Activated CD4-positive, alpha-beta T cell treated with anti-CD3 and anti-CD28 coated beads, Interleukin-2, amount 10 ng/mL, durations not matched to agents 24 days and 14 days (primary cell): ENCODE measurements at regions of chr1 and their contacts with region 1.

Region 1: DNA sequence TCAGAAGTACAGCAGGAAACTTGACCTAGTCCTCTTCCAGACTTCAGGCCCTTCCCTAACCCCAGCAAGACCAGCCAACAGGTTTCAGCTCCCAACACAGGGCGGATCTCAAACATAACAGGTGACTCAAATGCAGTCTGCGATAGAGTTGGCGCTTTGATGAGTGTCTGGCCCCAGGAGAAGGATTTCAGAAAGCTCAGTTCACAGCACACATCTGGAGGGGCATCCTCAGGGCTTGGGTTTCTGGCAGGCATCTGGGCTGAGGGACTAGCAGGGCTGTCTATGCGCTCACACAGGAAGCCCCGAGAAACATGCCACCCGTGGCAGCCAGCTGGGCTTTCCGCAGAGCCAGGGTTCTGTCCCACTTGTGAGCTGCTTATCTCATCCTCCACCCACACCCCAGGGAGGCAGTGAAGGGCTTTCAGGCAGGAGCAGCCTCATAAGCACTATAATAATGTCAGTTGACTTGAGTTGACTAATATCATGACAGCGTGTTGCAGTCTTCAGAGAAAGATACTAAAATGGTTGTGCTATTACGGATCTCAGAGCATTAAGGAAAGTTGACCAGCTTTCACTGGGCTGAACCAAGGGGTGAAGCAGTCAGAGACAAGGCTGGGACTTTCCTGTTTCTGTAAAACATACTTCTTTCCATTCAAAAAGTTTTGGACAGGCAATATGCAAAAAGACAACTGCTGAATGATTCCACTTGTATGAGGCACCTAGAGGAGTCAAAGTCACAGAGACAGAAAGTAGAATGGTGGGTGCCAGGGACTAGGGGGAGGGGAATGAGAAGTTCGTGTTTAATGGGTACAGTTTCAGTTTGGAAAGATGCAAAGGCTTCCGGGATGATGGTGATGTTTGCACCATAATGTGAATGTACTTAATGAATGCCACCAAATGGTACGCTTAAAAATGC is 233.0 kb upstream of the IRF2BP2 start:
- DNase-seq: peak; percentile 89
- H3K4me3 Mint-ChIP-seq: peak overlapping the region; percentile 74
- H3K27ac Mint-ChIP-seq: peak overlapping the region; percentile 94
- H3K4me1 Mint-ChIP-seq: peaks cover 84% of the 10 kb centered on the region
- H3K27me3 Mint-ChIP-seq: no peaks in the 10 kb centered on the region

Region 2: GRCh38 chr1:234730770-234731568 is 112.0 kb before region 1 on chr1:
- intact Hi-C with region 1: loop called (anchors 1 kb)
- DNase-seq: peak; percentile 86
- H3K4me3 Mint-ChIP-seq: peak overlapping the region; percentile 68
- H3K27ac Mint-ChIP-seq: peak overlapping the region; percentile 96
- H3K4me1 Mint-ChIP-seq: peaks cover 77% of the 10 kb centered on the region
- H3K27me3 Mint-ChIP-seq: no peaks in the 10 kb centered on the region

Region 3: GRCh38 chr1:234875953-234876855 is 33.2 kb after region 1 on chr1:
- intact Hi-C with region 1: loop called (anchors 1 kb)
- DNase-seq: no peak
- H3K4me3 Mint-ChIP-seq: peak overlapping the region; percentile 3
- H3K27ac Mint-ChIP-seq: peak overlapping the region; percentile 92
- H3K4me1 Mint-ChIP-seq: peaks cover 51% of the 10 kb centered on the region
- H3K27me3 Mint-ChIP-seq: no peaks in the 10 kb centered on the region

Region 4: GRCh38 chr1:234925440-234926263 is 82.7 kb after region 1 on chr1:
- intact Hi-C with region 1: loop called (anchors 1 kb)
- DNase-seq: peak; percentile 78
- H3K4me3 Mint-ChIP-seq: peak overlapping the region; percentile 83
- H3K27ac Mint-ChIP-seq: peak overlapping the region; percentile 95
- H3K4me1 Mint-ChIP-seq: peaks cover 59% of the 10 kb centered on the region
- H3K27me3 Mint-ChIP-seq: no peaks in the 10 kb centered on the region

Region 5: GRCh38 chr1:234978397-234979295 is 135.7 kb after region 1 on chr1:
- intact Hi-C with region 1: loop called (anchors 1 kb)
- DNase-seq: peak; percentile 82
- H3K4me3 Mint-ChIP-seq: peak overlapping the region; percentile 79
- H3K27ac Mint-ChIP-seq: peak overlapping the region; percentile 98
- H3K4me1 Mint-ChIP-seq: peaks cover 80% of the 10 kb centered on the region
- H3K27me3 Mint-ChIP-seq: no peaks in the 10 kb centered on the region

Region 6: GRCh38 chr1:235075188-235075926 is 232.4 kb after region 1 on chr1:
- intact Hi-C with region 1: loop called (anchors 1 kb)
- DNase-seq: peak; percentile 82
- H3K4me3 Mint-ChIP-seq: peak overlapping the region; percentile 69
- H3K27ac Mint-ChIP-seq: peak overlapping the region; percentile 100
- H3K4me1 Mint-ChIP-seq: peaks cover 31% of the 10 kb centered on the region
- H3K27me3 Mint-ChIP-seq: no peaks in the 10 kb centered on the region